ENCODE measurements at regions of chr11 and their contacts with region 1.

Region 1: DNA sequence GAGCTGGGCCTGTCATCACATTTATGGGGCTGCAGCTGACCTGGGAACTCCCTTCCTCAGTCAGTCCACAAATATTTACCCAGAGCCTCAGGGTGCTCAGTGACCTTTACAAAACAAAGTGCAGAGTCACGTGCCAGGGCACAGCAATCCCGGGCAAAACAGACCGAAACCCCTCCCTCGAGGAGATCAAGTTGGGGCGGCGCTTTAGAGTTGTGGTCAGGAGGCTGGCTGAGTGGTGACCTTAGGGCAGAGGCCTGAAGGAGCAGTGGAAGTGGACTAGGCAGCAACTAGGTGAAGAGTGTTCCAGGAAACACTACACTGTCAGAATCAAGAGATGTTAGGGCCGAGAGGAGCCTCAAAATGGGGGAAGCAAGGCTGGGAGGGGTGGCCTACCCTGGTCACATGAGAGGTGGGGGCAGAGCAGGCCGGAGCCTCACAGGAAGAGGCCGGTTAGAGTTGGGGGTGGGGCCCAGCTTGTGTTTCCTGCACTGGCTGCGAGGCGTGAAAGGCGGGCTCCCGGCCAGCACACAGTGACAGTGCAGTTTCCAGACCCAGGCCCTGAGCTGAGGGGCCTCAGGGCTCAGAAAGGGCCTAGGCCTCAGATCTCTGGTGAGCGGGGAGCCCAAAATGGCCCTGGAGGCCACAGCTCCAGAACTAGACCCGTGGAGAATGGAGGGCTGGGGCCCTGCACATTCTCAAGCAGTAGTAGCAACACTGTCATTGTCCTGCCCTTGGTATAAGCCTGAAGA is 3.7 kb upstream of the NEAT1 start:
- DNase-seq: peak; percentile 97
- H3K4me3 Mint-ChIP-seq: peak overlapping the region; percentile 97
- H3K27ac Mint-ChIP-seq: peak overlapping the region; percentile 100
- H3K4me1 Mint-ChIP-seq: peaks cover 47% of the 10 kb centered on the region
- H3K27me3 Mint-ChIP-seq: peaks cover 12% of the 10 kb centered on the region

Region 2: DNA sequence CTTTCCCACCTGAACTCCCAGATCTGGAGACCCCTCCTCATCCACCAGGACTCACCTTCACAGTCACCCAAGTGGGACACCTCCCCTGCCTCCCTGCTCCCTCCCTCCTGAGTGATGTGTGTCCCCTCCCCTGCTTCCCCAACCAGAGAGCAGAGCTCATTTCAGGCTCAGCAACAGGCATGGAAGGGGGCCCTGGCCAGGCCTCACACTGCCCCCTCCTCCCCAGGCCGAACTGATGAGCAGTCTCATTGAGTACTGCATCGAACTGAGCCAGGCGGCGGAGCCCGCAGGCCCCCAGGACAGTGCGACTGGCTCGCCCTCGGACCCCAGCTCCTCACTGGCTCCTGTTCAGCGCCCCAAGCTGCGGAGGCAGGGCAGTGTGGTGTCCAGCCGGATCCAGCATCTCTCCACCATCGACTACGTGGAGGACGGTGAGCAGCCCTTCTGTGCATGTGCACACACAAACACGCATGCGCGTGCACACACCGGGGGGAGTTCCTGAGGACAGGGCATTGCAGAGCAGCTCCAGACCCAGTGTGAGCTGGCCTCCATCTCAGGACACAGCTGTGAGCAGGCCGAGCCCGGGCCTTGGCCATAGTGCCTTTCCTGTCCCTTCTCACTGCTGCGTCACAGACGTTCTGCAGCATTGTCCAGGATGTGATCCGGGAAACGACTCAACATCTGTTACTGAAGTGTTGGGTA is 14.1 kb before region 1 on chr11:
- CTCF ChIA-PET with region 1: interaction called, 18 read pairs
- POLR2A ChIA-PET with region 1: interaction called, 4 read pairs
- intact Hi-C with region 1: no loop called
- DNase-seq: no peak
- H3K4me3 Mint-ChIP-seq: no peak overlapping the region
- H3K27ac Mint-ChIP-seq: no peak overlapping the region
- H3K4me1 Mint-ChIP-seq: no peaks in the 10 kb centered on the region
- H3K27me3 Mint-ChIP-seq: no peaks in the 10 kb centered on the region

Region 3: GRCh38 chr11:65454696-65455456 is 36.0 kb after region 1 on chr11:
- CTCF ChIA-PET with region 1: interaction called, 11 read pairs
- POLR2A ChIA-PET with region 1: interaction called, 5 read pairs
- intact Hi-C with region 1: no loop called
- DNase-seq: peak; percentile 92
- H3K4me3 Mint-ChIP-seq: peak overlapping the region; percentile 91
- H3K27ac Mint-ChIP-seq: peak overlapping the region; percentile 79
- H3K4me1 Mint-ChIP-seq: peaks cover 41% of the 10 kb centered on the region
- H3K27me3 Mint-ChIP-seq: no peaks in the 10 kb centered on the region

Region 4: DNA sequence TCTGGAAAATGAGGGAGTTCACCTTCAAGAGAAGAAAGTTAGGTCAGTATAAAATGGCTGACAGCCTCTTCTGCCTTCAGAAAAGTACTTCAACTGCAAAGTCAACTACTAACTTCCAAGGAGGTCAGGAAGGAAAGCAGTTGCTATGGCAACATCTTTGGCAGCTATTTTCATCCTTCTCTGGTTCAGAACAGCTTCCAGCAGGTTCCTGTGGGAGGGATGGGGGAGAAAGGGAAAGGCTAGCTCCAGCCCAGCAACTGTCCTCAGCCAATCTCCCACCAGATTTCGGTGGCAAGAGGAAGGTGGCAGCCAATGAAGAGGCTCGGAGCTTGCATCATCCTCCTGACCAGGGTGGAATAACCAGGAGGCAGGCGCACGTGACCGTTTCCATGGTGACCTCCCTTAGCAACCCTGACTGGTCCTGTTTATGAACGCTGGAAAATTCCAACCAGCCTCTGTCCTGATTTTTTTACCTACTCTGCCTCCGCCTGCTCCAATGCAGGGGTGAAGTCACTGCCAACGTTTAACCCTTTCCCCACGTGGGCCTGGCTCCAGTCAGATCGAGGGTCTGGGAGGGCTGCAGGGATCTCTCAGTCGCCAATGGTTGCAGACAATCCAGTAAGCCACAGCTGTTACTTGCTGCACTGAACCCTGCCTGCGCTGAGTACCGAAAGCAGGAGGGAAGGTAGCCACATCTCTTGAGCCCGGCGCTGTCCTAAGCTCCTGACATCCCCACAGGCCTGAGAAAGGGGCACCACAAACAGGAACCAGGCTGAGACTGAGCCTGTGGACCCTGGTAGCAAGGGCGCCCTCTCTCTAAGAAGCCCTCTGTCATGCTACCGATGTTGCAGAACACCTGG is 68.8 kb after region 1 on chr11:
- CTCF ChIA-PET with region 1: interaction called, 10 read pairs
- POLR2A ChIA-PET with region 1: interaction called, 4,089 read pairs
- intact Hi-C with region 1: no loop called
- DNase-seq: peak; percentile 71
- H3K4me3 Mint-ChIP-seq: no peak overlapping the region
- H3K27ac Mint-ChIP-seq: peak overlapping the region; percentile 67
- H3K4me1 Mint-ChIP-seq: peaks cover 39% of the 10 kb centered on the region
- H3K27me3 Mint-ChIP-seq: no peaks in the 10 kb centered on the region

Region 5: DNA sequence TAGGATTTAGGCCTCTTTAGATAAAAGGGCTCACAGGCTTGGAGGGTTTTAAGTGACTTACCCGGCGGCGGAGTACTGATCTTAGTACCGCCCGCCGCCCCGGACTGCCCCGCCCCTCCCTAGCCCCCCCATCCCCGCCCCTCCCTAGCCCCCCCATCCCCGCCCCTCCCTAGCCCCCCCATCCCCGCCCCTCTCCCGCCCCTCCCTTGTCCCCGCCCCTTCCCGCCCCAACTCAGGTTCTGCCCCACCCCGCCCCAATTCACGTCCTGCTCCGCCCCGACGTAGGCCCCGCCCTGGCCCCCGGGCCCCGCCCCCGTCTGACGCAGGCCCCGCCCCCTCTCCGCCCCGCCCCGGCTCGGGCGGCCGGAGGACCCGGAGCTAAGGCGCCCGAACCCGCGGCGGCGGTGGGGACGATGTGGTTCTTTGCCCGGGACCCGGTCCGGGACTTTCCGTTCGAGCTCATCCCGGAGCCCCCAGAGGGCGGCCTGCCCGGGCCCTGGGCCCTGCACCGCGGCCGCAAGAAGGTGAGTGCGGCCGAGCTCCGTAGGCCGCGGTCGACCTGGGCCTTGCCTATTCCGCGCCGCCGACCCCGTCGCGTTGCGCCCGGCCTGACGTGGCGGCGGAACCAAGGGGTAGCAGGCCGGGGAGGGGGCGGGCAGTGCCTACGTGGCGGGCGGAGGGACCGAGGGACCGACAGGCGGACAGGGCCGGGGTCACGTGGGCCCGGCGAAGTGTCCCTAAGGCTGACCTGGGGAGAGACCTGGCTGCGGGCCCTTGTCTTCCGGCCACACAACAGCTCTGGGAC is 106.1 kb after region 1 on chr11 and contains the start of gene SCYL1:
- CTCF ChIA-PET with region 1: interaction called, 3 read pairs
- POLR2A ChIA-PET with region 1: interaction called, 10 read pairs
- intact Hi-C with region 1: no loop called
- DNase-seq: peak; percentile 90
- H3K4me3 Mint-ChIP-seq: peak within 1 kb of the TSS; percentile 84
- H3K27ac Mint-ChIP-seq: peak within 1 kb of the TSS; percentile 84
- H3K4me1 Mint-ChIP-seq: peaks cover 57% of the 10 kb centered on the region
- H3K27me3 Mint-ChIP-seq: no peaks in the 10 kb centered on the region
- total RNA-seq, gene SCYL1: 67.8 to 69.8 TPM

Region 6: GRCh38 chr11:65575568-65576231 is 156.8 kb after region 1 on chr11 and contains the start of gene EHBP1L1:
- CTCF ChIA-PET with region 1: interaction called, 4 read pairs
- POLR2A ChIA-PET with region 1: interaction called, 10 read pairs
- intact Hi-C with region 1: loop called (anchors 2 kb)
- DNase-seq: peak; percentile 87
- H3K4me3 Mint-ChIP-seq: peak within 1 kb of the TSS; percentile 90
- H3K27ac Mint-ChIP-seq: peak within 1 kb of the TSS; percentile 93
- H3K4me1 Mint-ChIP-seq: peaks cover 47% of the 10 kb centered on the region
- H3K27me3 Mint-ChIP-seq: no peaks in the 10 kb centered on the region
- total RNA-seq, gene EHBP1L1: 137 to 141 TPM

Measured in activated CD4-positive, alpha-beta memory T cell treated with anti-CD3 and anti-CD28 coated beads for 36 hours (primary cell).